Activated T-helper 1 cell treated with anti-CD3 and anti-CD28 coated beads, Interleukin-12 subunit alpha, Interleukin-12 subunit beta, Interleukin-2, Interleukin-4 antibody, amounts not matched to agents 30 ng/mL and 10 ng/mL and 1 ng/mL, durations not matched to agents 14 hours and 24 hours and 36 hours (primary cell): ENCODE measurements at regions of chr7 and their contacts with region 1.

Region 1: DNA sequence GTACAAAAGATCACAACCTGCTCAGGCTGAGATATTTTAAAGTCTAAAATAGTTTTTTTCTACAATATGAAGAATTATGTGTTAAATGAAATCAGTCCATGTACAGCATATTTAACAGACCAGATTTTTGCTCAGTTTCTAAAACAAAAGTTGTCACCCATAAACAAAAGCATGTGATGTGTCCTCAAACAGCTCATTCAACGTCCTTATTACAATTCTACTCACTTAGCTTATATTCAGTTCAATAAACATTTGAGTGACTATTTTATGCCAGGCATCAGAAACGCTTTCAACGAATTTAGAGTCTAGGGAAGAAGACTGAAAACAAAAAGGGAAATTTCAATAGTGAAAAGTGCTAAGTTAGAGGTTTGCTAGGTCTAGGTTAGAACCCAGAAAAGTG is 457.3 kb upstream of the SEMA3A start:
- DNase-seq: no peak
- H3K4me3 Mint-ChIP-seq: no peak overlapping the region
- H3K27ac Mint-ChIP-seq: no peak overlapping the region
- H3K4me1 Mint-ChIP-seq: no peaks in the 10 kb centered on the region
- H3K27me3 Mint-ChIP-seq: peaks cover 4% of the 10 kb centered on the region

Region 2: GRCh38 chr7:84663224-84663623 is 11.3 kb after region 1 on chr7:
- intact Hi-C with region 1: loop called (anchors 1 kb)
- DNase-seq: no peak
- H3K4me3 Mint-ChIP-seq: no peak overlapping the region
- H3K27ac Mint-ChIP-seq: no peak overlapping the region
- H3K4me1 Mint-ChIP-seq: no peaks in the 10 kb centered on the region
- H3K27me3 Mint-ChIP-seq: peaks cover 3% of the 10 kb centered on the region

Region 3: DNA sequence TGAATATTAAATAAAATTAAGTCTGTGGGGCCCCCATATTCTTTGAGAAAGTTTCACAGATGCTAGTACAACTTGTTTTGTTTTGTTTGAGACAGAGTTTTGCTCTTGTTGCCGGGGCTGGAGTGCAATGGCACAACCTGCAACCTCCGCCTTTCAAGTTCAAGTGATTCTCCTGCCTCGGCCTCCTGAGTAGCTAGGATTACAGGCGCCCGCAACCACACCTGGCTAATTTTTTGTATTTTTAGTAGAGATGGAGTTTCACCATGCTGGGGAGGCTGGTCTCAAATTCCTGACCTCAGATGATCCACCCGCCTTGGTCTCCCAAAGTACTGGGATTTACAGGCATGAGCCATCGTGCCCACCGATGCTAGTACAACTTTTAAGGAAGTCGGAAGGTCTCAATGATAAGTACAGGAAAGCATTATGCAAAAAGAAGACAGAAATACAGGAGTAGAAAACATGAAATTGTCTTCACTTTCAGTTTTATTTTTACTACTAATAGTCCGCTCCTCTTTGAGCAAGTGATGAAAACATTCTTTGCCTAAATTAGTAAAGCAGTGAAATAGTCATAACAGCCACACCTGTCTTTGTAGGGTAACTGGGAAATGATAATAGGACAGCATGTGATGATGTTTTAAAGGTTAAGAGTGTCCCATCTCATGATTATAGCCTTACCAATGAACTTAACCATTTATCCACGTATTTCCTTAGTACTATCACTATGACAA is 387.5 kb after region 1 on chr7:
- intact Hi-C with region 1: no loop called
- DNase-seq: no peak
- H3K4me3 Mint-ChIP-seq: no peak overlapping the region
- H3K27ac Mint-ChIP-seq: no peak overlapping the region
- H3K4me1 Mint-ChIP-seq: no peaks in the 10 kb centered on the region
- H3K27me3 Mint-ChIP-seq: no peaks in the 10 kb centered on the region